HCT116 (cell line): ENCODE measurements at regions of chr17 and their contacts with region 1.

Region 1: DNA sequence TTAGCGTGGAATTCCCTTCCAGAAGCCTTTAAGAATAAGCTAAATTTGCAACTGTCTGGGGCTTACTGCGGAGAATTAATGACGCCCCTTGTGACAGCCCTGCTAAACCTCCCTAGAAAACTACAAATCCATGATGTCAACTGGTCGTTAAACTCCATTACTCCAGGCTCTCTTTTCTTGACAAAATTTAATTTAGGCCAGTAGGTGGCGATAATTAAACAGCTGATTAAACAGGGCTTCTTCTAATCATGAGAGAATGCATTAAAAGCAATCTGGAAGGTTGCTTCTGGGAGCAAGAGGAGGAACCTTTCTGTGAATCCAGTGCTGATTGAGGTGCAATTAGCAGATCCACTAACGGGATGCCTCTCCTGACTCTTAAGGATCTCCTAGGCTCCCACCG is 8.1 kb upstream of the NLRP1 start:
- DNase-seq: peak; percentile 29
- ATAC-seq: peak; percentile 68
- H3K4me3 ChIP-seq: no peak overlapping the region
- H3K27ac ChIP-seq: no peak overlapping the region
- H3K4me1 ChIP-seq: no peaks in the 10 kb centered on the region
- H3K27me3 ChIP-seq: peaks cover 38% of the 10 kb centered on the region
- CTCF ChIP-seq: peak; percentile 25 to 76 (median 68); a peak in 5 of 6 replicates
- POLR2A ChIP-seq: no peak
- RAD21 ChIP-seq: peak; percentile 72

Region 2: GRCh38 chr17:5780476-5780875 is 188.1 kb after region 1 on chr17:
- CTCF ChIA-PET with region 1: no interaction called
- POLR2A ChIA-PET with region 1: no interaction called
- RAD21 ChIA-PET with region 1: no interaction called
- intact Hi-C with region 1: no loop called
- DNase-seq: peak; percentile 31
- ATAC-seq: peak; percentile 85
- H3K4me3 ChIP-seq: no peak overlapping the region
- H3K27ac ChIP-seq: no peak overlapping the region
- H3K4me1 ChIP-seq: peaks cover 2 to 17% of the 10 kb centered on the region in 2 experiments; a peak in 3 of 4 replicates
- H3K27me3 ChIP-seq: peaks cover 9% of the 10 kb centered on the region
- CTCF ChIP-seq: peak in 2 of 3 experiments; percentile 7 to 23; a peak in 1 of 6 replicates
- POLR2A ChIP-seq: no peak
- RAD21 ChIP-seq: peak; percentile 22; the same call in 1 of the 2 replicates

Region 3: GRCh38 chr17:6069539-6070429 is 477.4 kb after region 1 on chr17 and contains the start of gene WSCD1:
- CTCF ChIA-PET with region 1: interaction called, 4 read pairs
- POLR2A ChIA-PET with region 1: no interaction called
- RAD21 ChIA-PET with region 1: no interaction called
- intact Hi-C with region 1: loop called (anchors 10 kb)
- DNase-seq: no peak
- ATAC-seq: 0 out of 2 replicates have a peak, but pooled peaks have one; percentile 13
- H3K4me3 ChIP-seq: no peak within 1 kb of the TSS
- H3K27ac ChIP-seq: no peak within 1 kb of the TSS
- H3K4me1 ChIP-seq: no peaks in the 10 kb centered on the region
- H3K27me3 ChIP-seq: peaks cover 26% of the 10 kb centered on the region
- CTCF ChIP-seq: no peak
- POLR2A ChIP-seq: no peak
- RAD21 ChIP-seq: no peak
- total RNA-seq, gene WSCD1: 0.15 TPM

Region 4: DNA sequence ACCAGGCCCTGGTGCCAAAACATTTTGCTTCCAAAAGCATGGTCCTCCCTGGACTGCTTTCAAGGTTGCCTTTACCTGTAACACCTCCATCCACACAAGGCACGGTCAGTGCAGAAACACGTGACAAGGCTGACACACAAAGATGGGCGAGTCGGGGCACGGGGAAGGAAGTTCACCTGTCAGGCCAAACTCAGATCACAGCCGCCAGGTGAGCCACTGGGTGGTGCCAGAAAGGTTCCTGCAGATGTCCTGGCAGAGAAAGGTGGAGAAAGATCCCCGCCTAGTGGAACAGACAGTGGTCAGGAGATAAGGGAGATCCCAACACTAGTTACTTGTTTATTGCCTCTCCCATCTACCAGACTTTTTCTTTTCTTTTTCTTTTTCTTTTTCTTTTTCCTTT is 687.3 kb after region 1 on chr17:
- CTCF ChIA-PET with region 1: no interaction called
- POLR2A ChIA-PET with region 1: no interaction called
- RAD21 ChIA-PET with region 1: interaction called in 1 of 2 experiments, 5 read pairs
- intact Hi-C with region 1: loop called (anchors 1 kb)
- DNase-seq: peak; percentile 56
- ATAC-seq: peak; percentile 88
- H3K4me3 ChIP-seq: no peak overlapping the region
- H3K27ac ChIP-seq: no peak overlapping the region
- H3K4me1 ChIP-seq: no peaks in the 10 kb centered on the region
- H3K27me3 ChIP-seq: 0 out of 2 replicates have a peak, but pooled peaks cover 20% of the 10 kb centered on the region
- CTCF ChIP-seq: peak; percentile 60 to 98 (median 69)
- POLR2A ChIP-seq: no peak
- RAD21 ChIP-seq: peak; percentile 88

Region 5: GRCh38 chr17:6421700-6422604 is 829.6 kb after region 1 on chr17:
- CTCF ChIA-PET with region 1: interaction called, 7 read pairs
- POLR2A ChIA-PET with region 1: no interaction called
- RAD21 ChIA-PET with region 1: interaction called in 1 of 2 experiments, 4 read pairs
- intact Hi-C with region 1: loop called (anchors 1 kb)
- DNase-seq: peak; percentile 69
- ATAC-seq: peak; percentile 90
- H3K4me3 ChIP-seq: no peak overlapping the region
- H3K27ac ChIP-seq: no peak overlapping the region
- H3K4me1 ChIP-seq: peaks cover 0 to 4% of the 10 kb centered on the region in 2 experiments; a peak in 2 of 4 replicates
- H3K27me3 ChIP-seq: peaks cover 5% of the 10 kb centered on the region; the same call in 1 of the 2 replicates
- CTCF ChIP-seq: peak; percentile 77 to 88 (median 80)
- POLR2A ChIP-seq: no peak
- RAD21 ChIP-seq: peak; percentile 95

Region 6: GRCh38 chr17:6435968-6436367 is 843.6 kb after region 1 on chr17:
- CTCF ChIA-PET with region 1: interaction called, 11 read pairs
- POLR2A ChIA-PET with region 1: interaction called, 3 read pairs
- RAD21 ChIA-PET with region 1: no interaction called
- intact Hi-C with region 1: loop called (anchors 5 kb)
- DNase-seq: peak; percentile 46
- ATAC-seq: peak; percentile 97
- H3K4me3 ChIP-seq: no peak overlapping the region
- H3K27ac ChIP-seq: no peak overlapping the region
- H3K4me1 ChIP-seq: no peaks in the 10 kb centered on the region; a peak in 1 of 4 replicates
- H3K27me3 ChIP-seq: no peaks in the 10 kb centered on the region
- CTCF ChIP-seq: peak; percentile 57 to 85 (median 84); a peak in 5 of 6 replicates
- POLR2A ChIP-seq: no peak
- RAD21 ChIP-seq: peak; percentile 81